ENCODE measurements at regions of chr1 and their contacts with region 1.

Region 1: GRCh38 chr1:19341201-19342072 is 29.3 kb downstream of the SLC66A1 start:
- DNase-seq: peak; percentile 93

Region 2: GRCh38 chr1:18581420-18581880 is 760.0 kb before region 1 on chr1:
- intact Hi-C with region 1: no loop called
- DNase-seq: peak; percentile 74

Region 3: DNA sequence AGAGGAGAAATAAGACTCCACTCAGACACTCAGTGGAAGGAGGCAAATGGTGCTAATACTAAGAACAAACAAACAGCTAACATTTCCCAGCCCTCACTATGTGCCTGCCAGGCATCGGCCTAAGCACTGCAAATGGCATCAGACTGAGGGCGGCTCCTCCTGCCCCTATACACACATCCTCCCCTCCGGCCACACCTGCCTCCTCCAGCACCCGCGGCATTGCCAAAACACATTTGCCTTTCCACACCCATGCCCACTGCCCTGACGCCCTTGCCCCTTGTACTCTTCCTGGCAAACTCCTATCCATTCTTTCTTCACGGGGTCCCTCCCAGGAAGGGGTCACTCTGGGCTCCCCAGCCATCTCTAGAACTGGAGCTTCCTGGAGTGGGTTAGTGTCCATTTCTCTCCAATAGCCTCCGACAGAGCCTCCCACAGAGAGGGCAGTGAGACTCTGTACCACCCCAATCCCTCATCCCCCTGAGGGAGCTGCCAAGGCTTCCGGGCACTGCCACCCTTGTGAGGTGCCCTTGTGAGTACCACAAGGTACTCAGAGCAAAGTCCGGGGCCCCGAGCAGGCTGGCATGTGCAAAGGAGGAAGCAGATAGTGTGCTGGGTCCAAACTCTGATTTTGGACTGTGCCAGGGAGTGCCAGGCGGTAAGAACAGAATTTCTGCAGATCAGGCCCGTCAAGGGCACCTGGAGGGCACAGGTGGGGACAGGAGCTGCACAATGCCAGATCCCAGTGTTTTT is 53.8 kb before region 1 on chr1:
- intact Hi-C with region 1: no loop called
- DNase-seq: no peak

Region 4: GRCh38 chr1:19390901-19391595 is 49.6 kb after region 1 on chr1:
- intact Hi-C with region 1: loop called in 1 of 2 experiments (anchors 1 kb)
- DNase-seq: no peak

Region 5: GRCh38 chr1:19643602-19644394 is 302.4 kb after region 1 on chr1 and contains the start of gene NBL1:
- intact Hi-C with region 1: loop called in 1 of 2 experiments (anchors 5 kb)
- DNase-seq: peak; percentile 92
- total RNA-seq, gene NBL1: 137 to 186 TPM

Region 6: GRCh38 chr1:19651141-19651737 is 309.8 kb after region 1 on chr1:
- intact Hi-C with region 1: loop called in 1 of 2 experiments (anchors 5 kb)
- DNase-seq: peak; percentile 85